ENCODE measurements at regions of chr3 and their contacts with region 1.

Region 1: DNA sequence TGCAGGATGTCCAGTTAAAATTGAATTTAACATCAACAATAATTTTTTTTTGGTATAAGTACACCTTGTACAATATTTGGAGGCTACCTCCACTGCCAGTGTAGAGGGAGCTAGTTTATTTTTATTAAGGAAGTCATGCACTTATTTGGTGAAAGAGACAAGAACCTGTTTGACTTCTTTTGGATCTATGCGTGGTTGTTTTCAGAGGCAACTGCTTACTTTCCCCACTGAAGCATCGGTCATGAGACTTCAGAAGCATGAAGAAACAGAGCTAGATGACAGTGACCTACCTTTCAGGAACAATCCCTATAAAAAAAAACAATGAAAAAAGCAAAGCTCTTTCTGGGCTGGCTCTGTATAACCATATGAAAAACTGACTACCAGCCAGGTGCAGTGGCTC is 19.9 kb upstream of the ZNF148 start:
- DNase-seq: no peak
- H3K4me3 ChIP-seq: no peak overlapping the region
- H3K4me3 Mint-ChIP-seq: no peak overlapping the region
- H3K27ac Mint-ChIP-seq: no peak overlapping the region
- H3K4me1 ChIP-seq: no peaks in the 10 kb centered on the region
- H3K4me1 Mint-ChIP-seq: no peaks in the 10 kb centered on the region
- H3K27me3 ChIP-seq: no peaks in the 10 kb centered on the region
- H3K27me3 Mint-ChIP-seq: no peaks in the 10 kb centered on the region
- CTCF ChIP-seq: no peak

Region 2: DNA sequence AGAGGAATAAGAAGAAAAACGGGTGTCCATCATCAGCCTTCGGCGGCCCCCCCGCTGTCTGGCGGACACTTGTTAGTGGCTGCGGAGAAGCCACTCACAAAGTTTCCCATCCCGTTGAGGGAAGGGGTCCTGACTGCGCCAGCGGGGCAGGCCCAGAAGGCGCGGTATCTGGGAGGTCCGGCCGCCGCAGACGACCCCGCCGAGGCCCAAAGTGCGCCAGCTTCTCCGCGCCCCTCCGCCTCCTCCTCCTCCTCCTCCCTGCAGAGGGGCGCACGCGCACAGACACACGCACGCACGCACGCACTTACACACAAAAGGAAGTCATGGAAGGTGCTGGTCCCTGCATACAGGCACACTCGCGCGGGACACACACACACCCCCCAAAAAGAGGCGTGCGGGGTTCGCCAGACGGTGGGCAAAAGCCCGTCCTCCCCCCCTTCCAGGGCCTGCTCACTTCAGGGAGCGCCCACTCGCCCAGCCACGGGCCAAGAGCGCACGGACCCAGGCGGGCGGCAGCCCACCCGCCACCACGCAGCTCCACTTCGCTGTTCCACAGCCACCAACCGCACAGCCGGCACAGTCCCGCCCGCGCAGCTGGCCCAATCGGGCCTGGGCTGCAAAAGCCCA is 37.9 kb before region 1 on chr3:
- CTCF ChIA-PET with region 1: no interaction called
- POLR2A ChIA-PET with region 1: no interaction called
- intact Hi-C with region 1: no loop called
- DNase-seq: no peak
- H3K4me3 ChIP-seq: no peak overlapping the region
- H3K4me3 Mint-ChIP-seq: no peak overlapping the region
- H3K27ac Mint-ChIP-seq: no peak overlapping the region
- H3K4me1 ChIP-seq: peaks cover 3% of the 10 kb centered on the region; the same call in 1 of the 2 replicates
- H3K4me1 Mint-ChIP-seq: peaks cover 19% of the 10 kb centered on the region
- H3K27me3 ChIP-seq: no peaks in the 10 kb centered on the region
- H3K27me3 Mint-ChIP-seq: no peaks in the 10 kb centered on the region
- CTCF ChIP-seq: no peak

Region 3: DNA sequence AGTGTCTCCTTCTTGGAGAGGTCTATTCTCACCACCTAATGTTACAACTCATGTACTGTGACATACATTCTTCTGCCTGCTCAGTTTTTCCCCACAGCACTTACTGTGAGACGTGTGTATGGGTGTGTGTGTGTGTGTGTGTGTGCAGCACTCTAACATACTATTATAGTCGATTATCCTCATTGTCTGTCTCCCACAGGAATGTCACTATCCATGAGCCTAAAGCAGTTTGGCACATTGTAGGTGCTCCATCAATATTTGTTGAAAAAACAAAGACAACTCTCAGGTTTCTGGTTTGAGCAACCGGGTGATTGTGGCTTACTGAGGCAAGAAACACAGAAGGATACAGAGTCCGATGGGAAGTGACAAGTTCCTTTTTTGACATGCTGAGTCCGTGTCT is 11.3 kb before region 1 on chr3:
- CTCF ChIA-PET with region 1: no interaction called
- POLR2A ChIA-PET with region 1: no interaction called
- intact Hi-C with region 1: no loop called
- DNase-seq: no peak
- H3K4me3 ChIP-seq: no peak overlapping the region
- H3K4me3 Mint-ChIP-seq: no peak overlapping the region
- H3K27ac Mint-ChIP-seq: no peak overlapping the region
- H3K4me1 ChIP-seq: peaks cover 11% of the 10 kb centered on the region
- H3K4me1 Mint-ChIP-seq: peaks cover 27% of the 10 kb centered on the region
- H3K27me3 ChIP-seq: no peaks in the 10 kb centered on the region
- H3K27me3 Mint-ChIP-seq: no peaks in the 10 kb centered on the region
- CTCF ChIP-seq: no peak

Region 4: GRCh38 chr3:125406070-125406469 is 11.0 kb after region 1 on chr3:
- CTCF ChIA-PET with region 1: interaction called, 12 read pairs
- POLR2A ChIA-PET with region 1: no interaction called
- intact Hi-C with region 1: no loop called
- DNase-seq: no peak
- H3K4me3 ChIP-seq: no peak overlapping the region
- H3K4me3 Mint-ChIP-seq: no peak overlapping the region
- H3K27ac Mint-ChIP-seq: no peak overlapping the region
- H3K4me1 ChIP-seq: peaks cover 7% of the 10 kb centered on the region
- H3K4me1 Mint-ChIP-seq: peaks cover 2% of the 10 kb centered on the region
- H3K27me3 ChIP-seq: no peaks in the 10 kb centered on the region
- H3K27me3 Mint-ChIP-seq: no peaks in the 10 kb centered on the region
- CTCF ChIP-seq: no peak

Region 5: DNA sequence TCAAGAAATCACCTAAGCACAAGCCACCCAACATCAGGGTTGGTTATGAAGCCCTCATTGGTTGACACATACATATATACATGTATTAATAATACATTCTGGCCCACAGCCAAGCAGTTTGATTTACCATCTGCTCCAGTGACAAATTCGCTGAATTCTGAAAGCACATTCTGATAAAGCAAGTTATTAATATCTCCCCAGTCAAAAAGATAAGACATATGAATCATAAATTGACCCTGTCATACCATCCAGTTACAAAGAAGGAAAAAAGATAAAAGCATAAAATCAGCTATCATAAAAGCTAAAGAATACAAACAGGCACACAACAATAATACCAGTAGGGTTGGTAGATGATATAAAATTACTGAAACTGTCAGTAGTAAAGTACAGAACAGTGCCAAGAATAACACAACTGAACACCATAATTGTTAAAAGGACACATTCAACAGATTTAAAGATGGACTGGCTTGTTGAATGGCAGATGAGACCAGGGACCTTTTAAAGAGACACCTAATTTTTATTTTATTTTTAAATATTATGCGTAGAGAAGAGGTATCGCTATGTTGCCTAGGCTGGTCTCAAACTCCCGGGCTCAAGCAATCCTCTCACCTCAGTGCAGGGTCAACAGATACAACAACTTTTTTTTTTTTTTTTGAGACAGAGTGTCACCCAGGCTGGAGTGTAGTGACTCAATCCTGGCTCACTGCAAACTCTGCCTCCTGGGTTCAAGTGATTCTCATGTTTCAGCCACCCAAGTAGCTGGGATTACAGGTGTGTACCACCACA is 117.3 kb after region 1 on chr3:
- CTCF ChIA-PET with region 1: no interaction called
- POLR2A ChIA-PET with region 1: no interaction called
- intact Hi-C with region 1: no loop called
- DNase-seq: no peak
- H3K4me3 ChIP-seq: no peak overlapping the region
- H3K4me3 Mint-ChIP-seq: no peak overlapping the region
- H3K27ac Mint-ChIP-seq: no peak overlapping the region
- H3K4me1 ChIP-seq: no peaks in the 10 kb centered on the region
- H3K4me1 Mint-ChIP-seq: peaks cover 4% of the 10 kb centered on the region
- H3K27me3 ChIP-seq: no peaks in the 10 kb centered on the region
- H3K27me3 Mint-ChIP-seq: no peaks in the 10 kb centered on the region
- CTCF ChIP-seq: no peak